K562 (cell line): ENCODE measurements at regions of chr16 and their contacts with region 1.

Region 1: DNA sequence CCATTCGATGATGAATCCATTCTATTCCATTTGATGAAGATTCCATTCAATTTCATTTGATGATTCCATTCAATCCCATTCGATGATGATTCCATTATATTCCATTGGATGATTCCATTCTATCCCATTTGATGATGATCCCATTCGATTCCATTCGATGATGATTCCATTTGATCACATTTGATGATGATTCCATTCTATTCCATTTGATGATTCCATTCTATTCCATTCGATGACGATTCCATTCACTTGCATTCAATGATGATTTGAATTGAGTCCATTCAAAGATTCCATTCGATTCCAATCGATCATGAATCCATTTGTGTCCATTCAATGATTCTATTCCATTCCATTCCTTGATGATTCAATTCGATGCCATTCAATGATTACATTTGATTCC is 1139.5 kb downstream of the TP53TG3F start:
- DNase-seq: no peak
- ATAC-seq: no peak
- H3K4me3 ChIP-seq: no peak overlapping the region
- H3K27ac ChIP-seq: no peak overlapping the region
- H3K4me1 ChIP-seq: no peaks in the 10 kb centered on the region
- H3K27me3 ChIP-seq: no peaks in the 10 kb centered on the region
- CTCF ChIP-seq: no peak
- EP300 ChIP-seq: no peak
- POLR2A ChIP-seq: no peak
- RAD21 ChIP-seq: no peak

Region 2: DNA sequence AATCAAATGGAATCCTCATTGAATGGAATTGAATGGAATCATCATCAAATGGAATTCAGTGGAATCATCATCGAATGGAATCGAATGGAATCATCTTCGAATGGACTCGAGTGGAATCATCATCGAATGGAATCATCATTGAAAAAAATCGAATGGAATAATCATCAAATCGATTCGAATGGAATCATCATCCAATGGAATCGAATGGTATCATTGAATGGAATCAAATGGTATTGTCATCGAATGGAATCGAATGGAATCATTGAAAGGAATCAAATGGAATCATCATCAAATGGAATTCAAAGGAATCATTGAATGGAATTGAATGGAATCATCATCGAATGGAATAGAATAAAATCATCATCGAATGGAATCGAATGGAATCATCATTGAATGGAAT is 520.2 kb before region 1 on chr16:
- CTCF ChIA-PET with region 1: no interaction called
- POLR2A ChIA-PET with region 1: no interaction called
- in situ Hi-C with region 1: loop called (anchors 25 kb)
- intact Hi-C with region 1: no loop called
- DNase-seq: no peak
- ATAC-seq: no peak
- H3K4me3 ChIP-seq: no peak overlapping the region
- H3K27ac ChIP-seq: no peak overlapping the region
- H3K4me1 ChIP-seq: no peaks in the 10 kb centered on the region
- H3K27me3 ChIP-seq: no peaks in the 10 kb centered on the region
- CTCF ChIP-seq: no peak
- EP300 ChIP-seq: no peak
- POLR2A ChIP-seq: no peak
- RAD21 ChIP-seq: no peak